GM10248 (cell line): ENCODE measurements at regions of chr6 and their contacts with region 1.

Region 1: GRCh38 chr6:142387997-142388815 is 86.4 kb downstream of the ADGRG6 start:
- DNase-seq: peak; percentile 12
- CTCF ChIP-seq: peak; percentile 50

Region 2: DNA sequence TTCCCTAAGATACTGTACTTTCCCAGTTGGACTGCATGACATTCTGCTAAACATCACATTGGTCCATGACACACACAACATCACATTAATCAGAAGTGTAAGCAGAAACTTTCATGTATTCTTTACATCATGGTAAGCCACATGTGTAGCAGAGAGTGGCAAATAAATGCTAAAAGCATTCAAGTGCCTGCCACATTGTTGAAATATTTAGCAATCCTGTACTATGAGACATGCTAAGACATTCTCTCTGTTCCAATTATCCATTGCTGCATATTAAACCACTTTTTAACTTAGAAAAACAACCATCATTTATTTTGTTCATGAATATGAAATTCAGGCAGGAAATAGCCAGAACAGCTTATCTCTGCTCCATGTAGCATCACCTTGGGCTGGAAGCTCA is 463.2 kb before region 1 on chr6:
- CTCF ChIA-PET with region 1: no interaction called
- POLR2A ChIA-PET with region 1: no interaction called
- DNase-seq: no peak
- CTCF ChIP-seq: no peak

Region 3: GRCh38 chr6:142146828-142147662 is 241.2 kb before region 1 on chr6 and contains the starts of genes NMBR and VTA1:
- CTCF ChIA-PET with region 1: interaction called, 10 read pairs
- POLR2A ChIA-PET with region 1: no interaction called
- DNase-seq: peak; percentile 89
- CTCF ChIP-seq: peak; percentile 90

Region 4: DNA sequence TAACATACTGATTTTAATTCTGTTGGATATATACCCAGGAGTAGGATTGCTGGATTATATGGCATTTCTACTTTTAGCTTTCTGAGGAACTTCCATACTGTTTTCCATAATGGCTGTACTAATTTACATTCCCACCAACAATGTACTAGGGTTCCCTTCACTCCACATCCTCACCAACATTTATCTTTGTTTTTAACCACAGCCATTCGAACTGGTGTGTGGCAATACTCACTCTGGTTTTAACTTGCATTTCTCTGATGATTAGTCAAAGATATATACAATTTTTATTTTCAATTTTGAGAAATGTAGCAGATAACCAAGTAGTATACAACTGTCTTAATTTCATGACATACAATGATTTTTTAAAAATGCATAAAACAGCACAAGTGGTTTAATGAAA is 116.7 kb before region 1 on chr6:
- CTCF ChIA-PET with region 1: no interaction called
- POLR2A ChIA-PET with region 1: no interaction called
- DNase-seq: no peak
- CTCF ChIP-seq: no peak